Vagina (tissue), 2 donors: ENCODE measurements at regions of chrX and their contacts with region 1.

Region 1: DNA sequence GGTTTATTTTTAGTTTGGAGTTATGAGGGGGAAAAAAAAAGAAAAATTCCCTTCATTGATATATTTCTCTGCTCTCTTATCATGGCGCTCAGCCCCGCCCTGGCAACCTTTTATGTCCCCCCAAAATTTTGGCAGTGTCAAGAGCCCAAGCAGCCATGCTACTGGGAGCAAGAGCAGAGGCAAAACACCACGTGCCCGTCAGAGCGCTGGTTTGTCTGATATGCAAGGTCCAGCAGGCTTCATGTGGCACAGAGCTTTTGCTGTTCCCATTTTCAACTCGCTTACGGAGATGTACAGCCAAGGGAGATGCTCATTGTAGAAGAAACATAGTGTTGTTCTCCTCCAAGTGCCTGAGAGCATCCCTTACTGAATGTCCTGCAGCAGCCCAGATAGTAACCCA is 27.3 kb downstream of the SLITRK2 start:
- DNase-seq: no peak
- H3K4me3 ChIP-seq: no peak overlapping the region
- H3K27ac ChIP-seq: no peak overlapping the region
- H3K4me1 ChIP-seq: no peaks in the 10 kb centered on the region
- H3K27me3 ChIP-seq: no peaks in the 10 kb centered on the region
- CTCF ChIP-seq: no peak
- POLR2A ChIP-seq: no peak

Region 2: GRCh38 chrX:145609951-145610511 is 234.9 kb before region 1 on chrX:
- intact Hi-C with region 1: no loop called
- DNase-seq: no peak
- H3K4me3 ChIP-seq: no peak overlapping the region
- H3K27ac ChIP-seq: no peak overlapping the region
- H3K4me1 ChIP-seq: no peaks in the 10 kb centered on the region
- H3K27me3 ChIP-seq: no peaks in the 10 kb centered on the region
- CTCF ChIP-seq: no peak
- POLR2A ChIP-seq: no peak

Region 3: GRCh38 chrX:145825896-145826295 is 19.0 kb before region 1 on chrX:
- intact Hi-C with region 1: loop called (anchors 2 kb)
- DNase-seq: no peak
- H3K4me3 ChIP-seq: no peak overlapping the region
- H3K27ac ChIP-seq: no peak overlapping the region
- H3K4me1 ChIP-seq: no peaks in the 10 kb centered on the region
- H3K27me3 ChIP-seq: no peaks in the 10 kb centered on the region
- CTCF ChIP-seq: no peak
- POLR2A ChIP-seq: no peak